IMR-90 (cell line): ENCODE measurements at regions of chr13 and their contacts with region 1.

Region 1: DNA sequence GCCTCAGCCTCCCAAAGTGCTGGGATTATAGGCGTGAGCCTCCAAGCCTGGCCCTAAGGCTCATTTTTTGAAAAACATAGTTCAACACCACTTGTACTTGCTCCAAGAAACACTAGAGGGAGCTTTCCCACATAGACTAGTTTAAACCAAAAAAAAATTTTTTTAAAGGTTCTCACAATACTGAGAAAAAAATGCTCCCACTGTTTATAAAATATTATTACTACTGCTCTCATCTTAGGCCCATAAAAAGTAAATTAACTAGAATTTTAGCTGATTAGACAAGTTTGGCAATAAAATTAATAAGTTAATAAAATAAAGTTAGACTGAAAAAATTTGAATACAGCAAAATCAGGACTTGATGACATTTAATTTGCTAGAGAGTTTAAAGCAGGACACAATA is 109.5 kb downstream of the TBC1D4 start:
- DNase-seq: peak; percentile 62
- ATAC-seq: peak; percentile 82
- H3K4me3 ChIP-seq: no peak overlapping the region
- H3K27ac ChIP-seq: no peak overlapping the region
- H3K4me1 ChIP-seq: peaks cover 1% of the 10 kb centered on the region; the same call in 1 of the 2 replicates
- H3K27me3 ChIP-seq: no peaks in the 10 kb centered on the region
- CTCF ChIP-seq: peak; percentile 66
- POLR2A ChIP-seq: no peak
- RAD21 ChIP-seq: peak; percentile 62

Region 2: DNA sequence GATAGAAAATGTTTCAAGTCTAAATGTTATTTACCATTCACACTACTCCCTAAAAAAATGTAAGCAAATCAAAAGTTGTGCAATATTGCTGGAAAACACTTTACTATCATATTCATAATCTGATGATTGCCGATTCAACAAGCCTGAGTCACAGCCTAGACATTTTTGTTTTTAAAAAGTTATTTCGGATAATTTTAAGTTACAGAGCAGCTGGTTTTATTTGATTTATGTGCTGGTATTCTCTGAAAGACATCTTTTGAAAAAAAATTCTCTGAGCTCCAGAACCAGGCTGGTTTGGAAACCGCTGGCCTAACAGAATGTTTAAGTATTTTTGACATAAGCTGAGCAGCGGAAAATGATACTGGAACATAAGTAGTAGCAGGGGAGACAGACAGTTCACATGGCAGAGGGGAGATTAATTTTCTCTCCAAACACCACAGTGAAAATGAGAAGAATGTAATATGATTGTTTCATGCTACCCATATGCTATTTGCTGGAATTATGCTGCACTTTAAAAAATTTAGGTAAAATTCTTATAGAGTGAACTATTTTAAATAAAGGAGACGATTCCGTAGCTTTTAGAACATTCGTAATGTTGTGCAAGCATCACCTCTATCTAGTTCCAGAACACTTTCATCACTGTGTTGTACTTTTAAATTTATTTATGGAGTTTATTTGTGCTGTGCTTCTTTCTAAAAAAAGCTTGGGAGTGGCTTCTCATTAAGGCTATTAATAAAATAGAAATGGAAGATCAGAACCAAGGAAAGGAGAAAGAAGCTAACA is 73.4 kb after region 1 on chr13:
- CTCF ChIA-PET with region 1: no interaction called
- POLR2A ChIA-PET with region 1: no interaction called
- dilution Hi-C with region 1: no loop called
- in situ Hi-C with region 1: no loop called
- intact Hi-C with region 1: loop called (anchors 10 kb)
- DNase-seq: peak; percentile 34
- ATAC-seq: peak; percentile 40
- H3K4me3 ChIP-seq: peak overlapping the region; percentile 14; the same call in 1 of the 2 replicates
- H3K27ac ChIP-seq: no peak overlapping the region
- H3K4me1 ChIP-seq: peaks cover 2% of the 10 kb centered on the region; the same call in 1 of the 2 replicates
- H3K27me3 ChIP-seq: no peaks in the 10 kb centered on the region
- CTCF ChIP-seq: no peak
- POLR2A ChIP-seq: no peak
- RAD21 ChIP-seq: no peak

Region 3: DNA sequence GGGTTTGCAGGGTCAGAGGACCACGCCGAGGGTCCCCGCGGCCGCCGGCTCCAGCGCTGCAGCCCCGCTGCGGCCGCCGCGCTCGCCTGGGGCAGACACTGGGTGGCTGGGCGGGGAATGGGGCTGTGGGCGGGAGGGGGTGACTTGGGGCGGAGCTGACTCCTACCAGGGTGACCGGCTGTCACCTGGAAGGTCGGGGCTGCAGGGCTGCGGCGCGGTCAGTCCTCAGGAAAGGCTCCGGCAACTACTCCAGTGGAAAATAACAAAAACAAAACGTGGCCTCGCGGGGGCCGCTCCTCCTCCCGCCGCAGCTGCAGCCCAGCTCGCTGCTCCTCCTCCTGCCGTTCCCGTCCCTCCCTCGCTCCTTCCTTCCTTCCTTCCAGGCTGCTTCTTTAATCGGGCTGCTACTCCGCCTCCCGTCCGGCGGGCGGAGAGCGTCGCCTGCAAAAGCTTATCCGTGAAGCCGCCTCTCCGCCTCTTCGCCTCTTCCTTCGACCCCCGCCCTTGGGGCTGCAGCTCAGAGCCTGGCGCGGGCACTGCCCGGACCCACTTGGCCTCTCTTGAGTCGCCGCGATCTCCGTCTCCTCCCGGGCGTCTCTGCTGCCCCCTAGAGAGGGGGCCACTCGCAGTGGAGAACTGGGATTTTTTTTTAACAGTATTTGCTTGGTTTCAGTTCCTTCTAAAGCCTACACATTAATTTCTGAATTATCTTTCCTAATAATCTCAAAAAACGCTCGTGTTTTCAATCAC is 109.7 kb after region 1 on chr13 and contains the start of gene TBC1D4:
- CTCF ChIA-PET with region 1: interaction called, 8 read pairs
- POLR2A ChIA-PET with region 1: interaction called, 3 read pairs
- dilution Hi-C with region 1: no loop called
- in situ Hi-C with region 1: no loop called
- intact Hi-C with region 1: loop called (anchors 1 kb)
- DNase-seq: peak; percentile 82
- ATAC-seq: peak; percentile 86
- H3K4me3 ChIP-seq: peak within 1 kb of the TSS; percentile 49
- H3K27ac ChIP-seq: peak within 1 kb of the TSS; percentile 25
- H3K4me1 ChIP-seq: peaks cover 3% of the 10 kb centered on the region; the same call in 1 of the 2 replicates
- H3K27me3 ChIP-seq: no peaks in the 10 kb centered on the region
- CTCF ChIP-seq: peak; percentile 84
- POLR2A ChIP-seq: 0 out of 2 replicates have a peak, but pooled peaks have one; percentile 39
- RAD21 ChIP-seq: peak; percentile 57
- total RNA-seq, gene TBC1D4: 11.4 and 22.8 TPM in 2 replicates

Region 4: GRCh38 chr13:75530536-75530935 is 158.0 kb after region 1 on chr13:
- CTCF ChIA-PET with region 1: no interaction called
- POLR2A ChIA-PET with region 1: interaction called, 15 read pairs
- dilution Hi-C with region 1: no loop called
- in situ Hi-C with region 1: no loop called
- intact Hi-C with region 1: no loop called
- DNase-seq: no peak
- ATAC-seq: no peak
- H3K4me3 ChIP-seq: no peak overlapping the region
- H3K27ac ChIP-seq: no peak overlapping the region
- H3K4me1 ChIP-seq: no peaks in the 10 kb centered on the region
- H3K27me3 ChIP-seq: no peaks in the 10 kb centered on the region
- CTCF ChIP-seq: no peak
- POLR2A ChIP-seq: no peak
- RAD21 ChIP-seq: no peak

Region 5: DNA sequence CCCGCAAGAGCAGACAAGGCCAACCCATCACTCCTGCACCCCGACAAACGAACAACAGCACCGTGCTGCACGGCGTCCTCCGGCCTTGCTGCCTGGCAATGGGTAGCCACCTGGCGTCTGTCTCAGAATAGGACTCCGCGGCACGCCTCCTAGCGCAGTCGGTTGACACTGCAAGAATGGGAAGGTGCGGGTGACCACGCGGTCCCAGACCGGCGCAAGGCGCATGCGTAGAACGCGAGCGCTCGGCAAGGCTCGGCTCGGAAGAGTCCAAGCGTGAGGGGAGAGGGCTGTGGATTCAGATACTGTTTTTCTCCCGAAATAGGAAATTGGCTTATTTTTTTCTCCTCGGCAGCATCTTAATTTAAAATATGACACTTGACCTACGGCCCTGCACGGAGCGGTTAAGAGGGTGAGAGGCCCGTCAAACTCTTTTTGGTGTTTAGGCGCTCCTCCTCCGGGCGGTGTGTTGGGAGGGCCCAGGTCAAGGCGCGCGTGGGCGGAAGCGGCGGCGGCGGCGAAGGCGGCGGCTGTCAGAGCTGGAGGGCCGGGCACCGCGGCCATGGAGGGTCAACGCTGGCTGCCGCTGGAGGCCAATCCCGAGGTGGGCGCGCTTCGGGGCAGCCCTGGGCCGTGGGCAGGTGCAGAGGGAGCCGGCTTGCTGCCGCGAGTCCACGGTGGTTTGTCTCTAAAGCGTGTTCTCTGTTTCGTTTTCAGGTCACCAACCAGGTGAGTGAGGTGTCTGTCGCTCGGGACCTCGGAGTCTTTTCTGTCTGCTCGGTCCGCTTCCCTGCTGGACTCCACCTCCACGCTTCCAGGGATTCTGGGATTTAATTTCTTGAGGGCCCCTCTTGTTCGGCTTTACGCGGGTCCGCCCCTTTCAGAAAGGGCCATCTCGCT is 177.0 kb after region 1 on chr13 and contains the start of gene UCHL3:
- CTCF ChIA-PET with region 1: interaction called, 3 read pairs
- POLR2A ChIA-PET with region 1: no interaction called
- dilution Hi-C with region 1: no loop called
- in situ Hi-C with region 1: loop called (anchors 10 kb)
- intact Hi-C with region 1: loop called (anchors 1 kb)
- DNase-seq: peak; percentile 95
- ATAC-seq: peak; percentile 96
- H3K4me3 ChIP-seq: peak within 1 kb of the TSS; percentile 83
- H3K27ac ChIP-seq: peak within 1 kb of the TSS; percentile 94
- H3K4me1 ChIP-seq: peaks cover 2% of the 10 kb centered on the region; the same call in 1 of the 2 replicates
- H3K27me3 ChIP-seq: no peaks in the 10 kb centered on the region
- CTCF ChIP-seq: peak; percentile 98
- POLR2A ChIP-seq: no peak; the same call in 1 of the 2 replicates
- RAD21 ChIP-seq: peak; percentile 79
- total RNA-seq, gene UCHL3: 60.8 and 63.8 TPM in 2 replicates